ENCODE measurements at regions of chr7 and their contacts with region 1.

Region 1: GRCh38 chr7:40244226-40244625 is 109.4 kb downstream of the SUGCT start:
- DNase-seq: no peak
- H3K4me3 ChIP-seq: no peak overlapping the region
- H3K27ac ChIP-seq: no peak overlapping the region
- H3K4me1 ChIP-seq: no peaks in the 10 kb centered on the region
- H3K27me3 ChIP-seq: no peaks in the 10 kb centered on the region
- CTCF ChIP-seq: no peak

Region 2: DNA sequence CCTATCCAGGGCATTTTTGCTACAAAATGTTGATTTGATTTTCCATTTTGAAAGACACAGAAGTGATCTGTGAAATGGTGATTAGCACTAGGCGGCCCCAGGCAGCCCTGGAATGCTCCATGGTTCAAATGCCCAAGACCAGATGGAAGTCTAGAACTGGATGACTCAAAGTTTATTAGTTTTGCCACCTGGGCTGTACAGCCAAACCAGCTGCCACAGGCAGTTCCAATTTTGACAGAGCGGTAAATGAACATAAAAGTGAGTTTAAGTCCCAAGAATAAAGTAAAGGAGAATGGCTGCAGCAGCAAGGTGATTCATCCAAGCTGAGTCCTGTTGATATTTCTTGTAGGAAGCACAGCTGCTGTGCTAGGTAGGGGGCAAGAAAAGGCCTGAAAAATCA is 71.1 kb after region 1 on chr7:
- CTCF ChIA-PET with region 1: no interaction called
- dilution Hi-C with region 1: no loop called
- in situ Hi-C with region 1: no loop called
- intact Hi-C with region 1: loop called (anchors 5 kb)
- DNase-seq: peak; percentile 9
- H3K4me3 ChIP-seq: no peak overlapping the region
- H3K27ac ChIP-seq: no peak overlapping the region
- H3K4me1 ChIP-seq: no peaks in the 10 kb centered on the region
- H3K27me3 ChIP-seq: no peaks in the 10 kb centered on the region
- CTCF ChIP-seq: no peak

Region 3: DNA sequence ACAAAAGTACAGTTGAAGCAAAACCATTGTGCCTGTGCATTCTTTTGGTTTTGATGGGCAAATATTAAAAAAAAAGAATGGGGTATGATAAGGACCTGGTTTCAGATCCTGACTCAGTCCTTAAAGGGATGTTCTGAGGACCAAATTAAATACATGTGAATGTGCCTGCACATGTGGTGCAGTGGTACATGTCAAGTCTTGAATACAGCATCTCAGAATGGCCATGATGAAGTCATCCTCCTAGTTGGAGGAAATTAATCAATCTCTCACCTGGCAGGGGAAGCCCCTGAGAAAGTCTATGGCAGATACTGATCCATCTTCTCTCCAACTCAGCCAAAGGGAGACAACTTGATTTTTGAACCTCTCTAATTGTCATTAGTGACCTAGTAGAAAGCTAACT is 97.6 kb after region 1 on chr7:
- CTCF ChIA-PET with region 1: no interaction called
- dilution Hi-C with region 1: no loop called
- in situ Hi-C with region 1: no loop called
- intact Hi-C with region 1: no loop called
- DNase-seq: peak; percentile 83
- H3K4me3 ChIP-seq: no peak overlapping the region
- H3K27ac ChIP-seq: no peak overlapping the region
- H3K4me1 ChIP-seq: peaks cover 10% of the 10 kb centered on the region
- H3K27me3 ChIP-seq: no peaks in the 10 kb centered on the region
- CTCF ChIP-seq: no peak